ENCODE measurements at regions of chr2 and their contacts with region 1.

Region 1: DNA sequence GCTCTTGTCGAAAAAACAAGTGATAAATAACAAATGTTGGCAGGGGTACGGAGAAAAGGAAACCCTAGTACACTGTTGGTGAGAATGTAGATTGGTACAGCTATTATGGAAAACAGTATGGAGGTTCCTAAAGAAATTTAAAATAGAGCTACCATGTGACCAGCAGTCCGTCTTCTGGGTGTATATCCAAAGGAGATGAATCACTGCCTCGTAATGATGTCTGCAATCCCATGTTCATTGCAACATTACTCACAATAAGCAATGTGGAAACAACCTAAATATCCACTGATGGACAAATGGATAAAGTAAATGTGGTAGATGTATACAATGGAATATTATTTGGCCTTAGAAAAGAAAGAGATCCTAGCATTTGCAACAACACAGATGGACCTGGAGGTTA is 50.6 kb downstream of the SLC16A14 start:
- DNase-seq: no peak
- ATAC-seq: no peak

Region 2: GRCh38 chr2:230614913-230615332 is 596.8 kb after region 1 on chr2:
- intact Hi-C with region 1: loop called in 1 of 2 experiments (anchors 10 kb)
- DNase-seq: peak; percentile 43 to 70
- ATAC-seq: no peak